Activated CD4-positive, alpha-beta T cell treated with anti-CD3 and anti-CD28 coated beads for 36 hours (primary cell): ENCODE measurements at regions of chrX and their contacts with region 1.

Region 1: DNA sequence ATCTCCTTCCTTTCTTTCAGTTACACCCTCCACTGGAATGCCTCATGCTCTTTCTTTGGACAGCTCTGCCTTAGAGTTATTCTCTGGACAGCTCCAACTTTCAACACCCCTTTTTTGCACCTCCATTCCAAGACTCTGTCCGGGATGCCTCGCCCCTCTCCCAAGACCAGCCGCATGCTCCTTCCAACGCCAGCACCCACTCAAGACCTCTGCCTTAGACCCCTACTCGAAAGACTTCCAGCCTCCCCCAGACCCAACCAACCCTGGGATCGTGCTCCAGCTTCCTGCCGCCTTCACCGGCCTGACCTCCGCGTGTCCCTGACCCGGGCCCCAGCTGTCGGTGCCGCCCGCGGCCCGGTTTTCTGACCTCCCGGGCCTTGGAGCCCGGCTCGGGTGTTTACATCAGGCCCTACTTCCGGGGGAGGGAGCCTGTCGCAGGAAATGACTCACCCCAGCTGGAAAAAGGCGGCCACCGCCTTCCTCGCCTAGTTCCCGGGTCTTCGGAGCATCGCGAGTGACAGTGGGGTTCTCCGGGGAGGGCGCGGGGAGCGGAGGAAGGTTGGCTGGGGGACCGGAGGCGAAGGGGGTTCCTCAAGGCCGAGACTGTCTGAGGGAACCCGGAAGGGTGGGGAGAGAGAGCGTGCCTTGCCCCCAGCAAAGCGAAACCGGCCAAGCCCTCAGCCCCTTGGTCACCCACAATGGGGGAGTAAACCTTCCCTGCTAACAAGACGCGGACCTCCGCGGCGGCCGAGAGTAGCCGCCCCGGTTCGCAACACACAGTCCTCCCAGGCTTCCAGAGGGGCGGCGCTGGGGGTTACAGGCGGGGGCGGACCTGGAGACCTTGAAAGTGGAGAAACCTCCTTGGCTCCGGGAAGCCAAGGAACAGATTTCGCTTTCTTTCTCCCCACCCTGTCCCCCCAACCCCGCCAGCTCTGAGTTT is at the start of gene WDR45:
- DNase-seq: peak; percentile 84
- ATAC-seq: peak; percentile 84
- H3K4me3 Mint-ChIP-seq: peak within 1 kb of the TSS; percentile 93
- H3K27ac Mint-ChIP-seq: peak within 1 kb of the TSS; percentile 99
- H3K4me1 Mint-ChIP-seq: peaks cover 16% of the 10 kb centered on the region
- H3K27me3 Mint-ChIP-seq: no peaks in the 10 kb centered on the region
- total RNA-seq, gene WDR45: 22.4 to 23.9 TPM

Region 2: GRCh38 chrX:49053223-49054072 is 26.3 kb before region 1 on chrX:
- CTCF ChIA-PET with region 1: no interaction called
- POLR2A ChIA-PET with region 1: no interaction called
- intact Hi-C with region 1: loop called in 1 of 2 experiments (anchors 2 kb)
- DNase-seq: peak; percentile 78
- ATAC-seq: peak; percentile 84
- H3K4me3 Mint-ChIP-seq: peak overlapping the region; percentile 74
- H3K27ac Mint-ChIP-seq: peak overlapping the region; percentile 84
- H3K4me1 Mint-ChIP-seq: peaks cover 34% of the 10 kb centered on the region
- H3K27me3 Mint-ChIP-seq: no peaks in the 10 kb centered on the region

Region 3: GRCh38 chrX:49064303-49064702 is 15.5 kb before region 1 on chrX:
- CTCF ChIA-PET with region 1: no interaction called
- POLR2A ChIA-PET with region 1: no interaction called
- intact Hi-C with region 1: no loop called
- DNase-seq: no peak
- ATAC-seq: no peak
- H3K4me3 Mint-ChIP-seq: no peak overlapping the region
- H3K27ac Mint-ChIP-seq: no peak overlapping the region
- H3K4me1 Mint-ChIP-seq: no peaks in the 10 kb centered on the region
- H3K27me3 Mint-ChIP-seq: no peaks in the 10 kb centered on the region